Activated CD4-positive, alpha-beta memory T cell treated with anti-CD3 and anti-CD28 coated beads for 36 hours (primary cell): ENCODE measurements at regions of chr9 and their contacts with region 1.

Region 1: GRCh38 chr9:1050116-1050800 is at the start of gene DMRT2:
- DNase-seq: peak; percentile 75
- H3K4me3 Mint-ChIP-seq: peak within 1 kb of the TSS; percentile 54
- H3K27ac Mint-ChIP-seq: no peak within 1 kb of the TSS
- H3K4me1 Mint-ChIP-seq: peaks cover 56% of the 10 kb centered on the region
- H3K27me3 Mint-ChIP-seq: peaks cover 73% of the 10 kb centered on the region
- total RNA-seq, gene DMRT2: 0.24 to 0.58 TPM

Region 2: GRCh38 chr9:489198-490197 is 560.8 kb before region 1 on chr9:
- CTCF ChIA-PET with region 1: no interaction called
- POLR2A ChIA-PET with region 1: no interaction called
- intact Hi-C with region 1: no loop called
- DNase-seq: no peak
- H3K4me3 Mint-ChIP-seq: no peak overlapping the region
- H3K27ac Mint-ChIP-seq: no peak overlapping the region
- H3K4me1 Mint-ChIP-seq: no peaks in the 10 kb centered on the region
- H3K27me3 Mint-ChIP-seq: no peaks in the 10 kb centered on the region

Region 3: DNA sequence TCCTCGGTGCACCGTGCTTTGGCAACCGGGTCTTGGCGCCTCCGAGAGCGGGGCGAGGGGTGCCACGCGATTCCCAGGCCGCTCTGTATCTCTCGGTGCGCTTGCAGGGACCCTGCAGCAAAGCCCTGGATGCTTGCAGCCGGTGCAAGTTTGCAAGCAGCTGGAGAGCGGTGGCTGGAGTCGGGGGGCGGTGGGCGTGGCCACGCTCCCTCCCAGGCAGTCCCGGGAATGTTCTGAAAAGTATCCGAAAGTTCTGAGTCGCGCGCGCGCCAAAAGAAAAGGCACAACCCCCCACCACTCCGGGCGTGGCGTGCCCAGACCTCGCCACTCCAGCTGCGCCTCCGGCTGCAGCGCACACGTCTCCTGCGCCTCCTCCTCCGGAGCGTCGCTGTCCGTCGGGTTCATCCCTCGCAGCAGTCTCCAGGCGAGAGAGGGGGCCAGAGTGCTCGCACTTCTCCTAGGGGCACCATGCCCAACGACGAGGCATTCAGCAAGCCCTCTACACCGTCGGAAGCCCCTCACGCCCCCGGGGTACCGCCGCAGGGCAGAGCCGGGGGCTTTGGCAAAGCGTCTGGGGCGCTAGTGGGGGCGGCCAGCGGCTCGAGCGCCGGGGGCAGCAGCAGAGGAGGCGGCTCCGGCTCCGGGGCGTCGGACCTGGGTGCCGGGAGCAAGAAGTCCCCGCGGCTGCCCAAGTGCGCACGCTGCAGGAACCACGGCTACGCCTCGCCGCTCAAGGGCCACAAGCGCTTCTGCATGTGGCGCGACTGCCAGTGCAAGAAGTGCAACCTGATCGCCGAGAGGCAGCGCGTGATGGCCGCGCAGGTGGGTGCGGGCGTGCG is 208.7 kb before region 1 on chr9 and contains the start of gene DMRT1:
- CTCF ChIA-PET with region 1: no interaction called
- POLR2A ChIA-PET with region 1: no interaction called
- intact Hi-C with region 1: loop called (anchors 5 kb)
- DNase-seq: no peak
- H3K4me3 Mint-ChIP-seq: no peak within 1 kb of the TSS
- H3K27ac Mint-ChIP-seq: no peak within 1 kb of the TSS
- H3K4me1 Mint-ChIP-seq: peaks cover 17% of the 10 kb centered on the region
- H3K27me3 Mint-ChIP-seq: peaks cover 47% of the 10 kb centered on the region
- total RNA-seq, gene DMRT1: not detected

Region 4: GRCh38 chr9:959914-960313 is 90.3 kb before region 1 on chr9:
- CTCF ChIA-PET with region 1: no interaction called
- POLR2A ChIA-PET with region 1: no interaction called
- intact Hi-C with region 1: no loop called
- DNase-seq: no peak
- H3K4me3 Mint-ChIP-seq: no peak overlapping the region
- H3K27ac Mint-ChIP-seq: no peak overlapping the region
- H3K4me1 Mint-ChIP-seq: no peaks in the 10 kb centered on the region
- H3K27me3 Mint-ChIP-seq: peaks cover 34% of the 10 kb centered on the region

Region 5: DNA sequence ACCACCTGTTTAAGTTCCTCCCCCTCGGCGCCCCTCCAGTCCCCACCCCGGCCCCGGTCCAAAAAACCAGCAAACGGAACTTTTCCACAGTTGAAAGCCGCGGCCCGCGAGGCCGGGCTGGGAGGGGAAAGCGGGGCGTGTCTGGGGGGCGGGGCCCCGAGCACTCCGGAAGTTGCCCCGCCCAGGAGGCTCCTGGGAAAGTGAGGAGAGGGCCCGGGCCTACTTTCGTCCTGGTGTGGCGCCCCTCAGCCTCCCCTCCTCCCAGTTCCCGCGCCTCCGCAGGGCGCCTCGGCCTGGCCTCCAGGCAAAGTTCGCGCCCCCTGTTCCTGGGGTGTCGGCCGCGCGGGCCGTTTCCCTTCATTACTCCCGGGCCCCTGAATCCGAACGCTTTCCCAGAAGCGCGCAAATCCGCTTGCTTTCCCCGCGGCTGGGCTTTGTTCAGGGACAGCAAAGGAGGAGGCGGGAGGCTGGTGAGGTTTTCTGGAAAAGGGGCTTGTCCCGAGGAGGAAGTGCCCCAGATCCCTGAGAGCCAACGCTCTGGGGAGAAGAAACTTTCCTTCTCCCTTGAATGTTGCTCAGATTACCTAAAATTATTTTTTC is 78.3 kb before region 1 on chr9:
- CTCF ChIA-PET with region 1: no interaction called
- POLR2A ChIA-PET with region 1: no interaction called
- intact Hi-C with region 1: loop called (anchors 1 kb)
- DNase-seq: peak; percentile 24
- H3K4me3 Mint-ChIP-seq: peak overlapping the region; percentile 8
- H3K27ac Mint-ChIP-seq: no peak overlapping the region
- H3K4me1 Mint-ChIP-seq: peaks cover 22% of the 10 kb centered on the region
- H3K27me3 Mint-ChIP-seq: peaks cover 68% of the 10 kb centered on the region

Region 6: GRCh38 chr9:1031951-1032601 is 18.2 kb before region 1 on chr9:
- CTCF ChIA-PET with region 1: no interaction called
- POLR2A ChIA-PET with region 1: no interaction called
- intact Hi-C with region 1: no loop called
- DNase-seq: no peak
- H3K4me3 Mint-ChIP-seq: no peak overlapping the region
- H3K27ac Mint-ChIP-seq: no peak overlapping the region
- H3K4me1 Mint-ChIP-seq: no peaks in the 10 kb centered on the region
- H3K27me3 Mint-ChIP-seq: peaks cover 24% of the 10 kb centered on the region